Calu3 (cell line): ENCODE measurements at regions of chr10 and their contacts with region 1.

Region 1: DNA sequence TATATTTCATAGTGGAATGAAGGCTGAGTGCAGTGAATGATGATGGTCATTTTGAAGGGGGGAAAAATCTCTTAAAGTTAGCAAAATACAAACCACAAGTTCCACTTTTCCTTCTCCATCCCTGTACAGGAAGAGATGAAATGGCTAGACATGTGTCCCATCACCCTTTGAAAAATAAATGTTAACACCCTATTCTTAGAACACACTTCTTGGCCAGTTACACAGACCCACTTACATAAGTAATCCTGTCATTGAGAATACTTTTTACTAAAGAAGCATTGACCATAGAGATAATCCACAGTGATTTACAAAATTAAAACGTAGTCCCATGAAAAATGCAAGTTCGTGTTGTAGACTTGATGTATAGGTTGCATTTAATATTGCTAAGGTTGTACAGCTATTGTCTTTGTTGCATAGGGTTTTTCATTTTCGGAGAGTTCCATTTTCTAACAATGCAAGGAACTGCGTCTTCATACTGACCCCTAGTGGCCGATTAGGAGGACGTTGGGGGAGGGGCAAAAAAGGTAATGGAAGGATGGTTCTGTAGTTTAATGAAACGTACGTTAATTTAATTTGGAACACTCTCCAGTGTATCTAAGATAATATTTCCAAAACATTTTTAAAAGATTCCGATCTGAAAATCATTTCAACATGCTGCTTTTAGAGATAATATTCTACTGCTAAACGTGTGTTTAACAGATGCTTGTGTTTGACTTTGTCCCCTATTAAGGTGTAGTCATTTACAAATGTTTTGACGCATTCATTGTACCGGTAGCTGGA is 60.9 kb downstream of the ARMC3 start:
- DNase-seq: peak; percentile 76
- H3K4me3 Mint-ChIP-seq: no peak overlapping the region
- H3K27ac Mint-ChIP-seq: no peak overlapping the region
- H3K4me1 Mint-ChIP-seq: no peaks in the 10 kb centered on the region
- H3K27me3 Mint-ChIP-seq: peaks cover 22% of the 10 kb centered on the region
- CTCF ChIP-seq: peak; percentile 77

Region 2: DNA sequence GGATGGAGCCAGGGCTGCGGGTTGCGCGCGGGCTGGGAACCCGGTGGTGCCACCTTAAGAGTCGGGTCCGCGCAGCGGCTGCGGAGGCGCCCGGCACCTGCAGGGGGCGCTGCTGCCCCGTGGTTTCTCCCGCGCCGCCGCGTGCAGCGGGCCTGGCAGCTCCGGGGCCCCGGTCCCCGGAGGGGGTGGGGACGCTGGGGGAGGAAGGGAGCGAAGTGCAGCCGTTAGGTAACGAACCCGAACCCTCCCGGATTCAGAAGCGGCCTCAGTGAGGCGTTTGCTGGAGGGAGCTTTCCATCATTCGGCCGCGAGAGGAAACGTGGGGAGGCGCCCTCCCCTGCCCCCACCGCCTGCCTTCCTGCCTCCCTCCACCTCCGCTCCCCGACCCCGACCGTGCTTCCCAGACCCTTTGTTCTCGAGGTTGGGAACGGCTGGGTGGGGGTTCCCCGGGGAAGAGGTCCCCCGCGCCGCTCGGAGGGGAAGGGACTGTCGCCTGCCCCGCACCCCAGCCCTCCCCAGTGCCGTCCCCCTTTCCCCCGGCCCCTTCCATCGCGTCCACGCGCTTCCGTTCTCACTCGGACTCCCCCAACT is 1492.9 kb before region 1 on chr10:
- CTCF ChIA-PET with region 1: no interaction called
- intact Hi-C with region 1: loop called (anchors 5 kb)
- DNase-seq: peak; percentile 94
- H3K4me3 Mint-ChIP-seq: peak overlapping the region; percentile 78
- H3K27ac Mint-ChIP-seq: no peak overlapping the region
- H3K4me1 Mint-ChIP-seq: no peaks in the 10 kb centered on the region
- H3K27me3 Mint-ChIP-seq: peaks cover 24% of the 10 kb centered on the region
- CTCF ChIP-seq: peak; percentile 92

Region 3: GRCh38 chr10:22010973-22011408 is 977.8 kb before region 1 on chr10:
- CTCF ChIA-PET with region 1: no interaction called
- intact Hi-C with region 1: loop called (anchors 2 kb)
- DNase-seq: no peak
- H3K4me3 Mint-ChIP-seq: no peak overlapping the region
- H3K27ac Mint-ChIP-seq: no peak overlapping the region
- H3K4me1 Mint-ChIP-seq: no peaks in the 10 kb centered on the region
- H3K27me3 Mint-ChIP-seq: peaks cover 13% of the 10 kb centered on the region
- CTCF ChIP-seq: peak; percentile 28

Region 4: GRCh38 chr10:22325272-22326144 is 663.3 kb before region 1 on chr10:
- CTCF ChIA-PET with region 1: no interaction called
- intact Hi-C with region 1: loop called (anchors 5 kb)
- DNase-seq: peak; percentile 73
- H3K4me3 Mint-ChIP-seq: peak overlapping the region; percentile 78
- H3K27ac Mint-ChIP-seq: no peak overlapping the region
- H3K4me1 Mint-ChIP-seq: peaks cover 24% of the 10 kb centered on the region
- H3K27me3 Mint-ChIP-seq: peaks cover 36% of the 10 kb centered on the region
- CTCF ChIP-seq: no peak

Region 5: DNA sequence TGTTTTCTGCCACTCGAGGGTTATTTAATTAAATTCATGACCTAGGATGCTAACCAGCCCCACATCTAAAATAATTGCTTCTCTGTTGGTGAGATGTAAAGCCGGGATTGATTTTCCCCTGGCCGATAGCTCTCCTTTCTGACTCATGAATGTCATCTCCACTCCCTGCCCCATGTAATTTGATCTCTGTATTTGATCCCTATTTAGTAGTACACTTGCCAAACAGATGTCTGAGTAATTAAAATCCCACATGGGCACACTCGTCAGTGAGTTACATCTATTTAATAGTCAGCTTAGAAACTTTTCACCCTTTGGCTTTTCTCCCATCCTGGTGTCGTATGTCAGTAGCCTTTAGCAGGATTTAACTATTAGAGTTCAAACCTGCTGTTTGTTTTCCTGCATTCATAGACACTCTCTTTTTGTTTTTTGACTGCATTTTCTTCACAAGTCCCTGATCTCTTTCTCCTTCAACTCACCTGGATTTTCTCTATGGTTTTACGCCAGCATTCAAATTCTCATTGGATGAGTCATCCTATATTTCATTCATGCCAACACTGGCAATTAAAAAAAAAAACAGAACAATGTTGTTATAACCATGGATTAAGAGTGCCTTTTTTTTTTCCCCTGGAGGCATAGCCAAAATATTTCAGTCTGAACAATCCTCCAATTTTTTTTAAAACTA is 560.7 kb before region 1 on chr10:
- CTCF ChIA-PET with region 1: no interaction called
- intact Hi-C with region 1: loop called (anchors 5 kb)
- DNase-seq: peak; percentile 43
- H3K4me3 Mint-ChIP-seq: peak overlapping the region; percentile 29
- H3K27ac Mint-ChIP-seq: peak overlapping the region; percentile 79
- H3K4me1 Mint-ChIP-seq: peaks cover 36% of the 10 kb centered on the region
- H3K27me3 Mint-ChIP-seq: no peaks in the 10 kb centered on the region
- CTCF ChIP-seq: no peak

Region 6: GRCh38 chr10:22573820-22574569 is 414.8 kb before region 1 on chr10:
- CTCF ChIA-PET with region 1: interaction called, 5 read pairs
- intact Hi-C with region 1: loop called (anchors 1 kb)
- DNase-seq: peak; percentile 7
- H3K4me3 Mint-ChIP-seq: no peak overlapping the region
- H3K27ac Mint-ChIP-seq: no peak overlapping the region
- H3K4me1 Mint-ChIP-seq: no peaks in the 10 kb centered on the region
- H3K27me3 Mint-ChIP-seq: no peaks in the 10 kb centered on the region
- CTCF ChIP-seq: peak; percentile 54

Region 7: GRCh38 chr10:22900841-22901601 is 87.8 kb before region 1 on chr10:
- CTCF ChIA-PET with region 1: no interaction called
- intact Hi-C with region 1: no loop called
- DNase-seq: no peak
- H3K4me3 Mint-ChIP-seq: no peak overlapping the region
- H3K27ac Mint-ChIP-seq: no peak overlapping the region
- H3K4me1 Mint-ChIP-seq: no peaks in the 10 kb centered on the region
- H3K27me3 Mint-ChIP-seq: no peaks in the 10 kb centered on the region
- CTCF ChIP-seq: no peak

Region 8: GRCh38 chr10:23067939-23068775 is 79.4 kb after region 1 on chr10:
- CTCF ChIA-PET with region 1: no interaction called
- intact Hi-C with region 1: loop called (anchors 2 kb)
- DNase-seq: peak; percentile 73
- H3K4me3 Mint-ChIP-seq: no peak overlapping the region
- H3K27ac Mint-ChIP-seq: no peak overlapping the region
- H3K4me1 Mint-ChIP-seq: peaks cover 18% of the 10 kb centered on the region
- H3K27me3 Mint-ChIP-seq: no peaks in the 10 kb centered on the region
- CTCF ChIP-seq: peak; percentile 81